MCF 10A (cell line): ENCODE measurements at regions of chr2 and their contacts with region 1.

Region 1: GRCh38 chr2:189287982-189288521 is 108.5 kb upstream of the COL5A2 start:
- DNase-seq: peak; percentile 72
- H3K4me3 Mint-ChIP-seq: no peak overlapping the region
- H3K27ac Mint-ChIP-seq: peak overlapping the region; percentile 80
- H3K4me1 Mint-ChIP-seq: peaks cover 29% of the 10 kb centered on the region
- H3K27me3 Mint-ChIP-seq: no peaks in the 10 kb centered on the region
- CTCF ChIP-seq: peak; percentile 60

Region 2: DNA sequence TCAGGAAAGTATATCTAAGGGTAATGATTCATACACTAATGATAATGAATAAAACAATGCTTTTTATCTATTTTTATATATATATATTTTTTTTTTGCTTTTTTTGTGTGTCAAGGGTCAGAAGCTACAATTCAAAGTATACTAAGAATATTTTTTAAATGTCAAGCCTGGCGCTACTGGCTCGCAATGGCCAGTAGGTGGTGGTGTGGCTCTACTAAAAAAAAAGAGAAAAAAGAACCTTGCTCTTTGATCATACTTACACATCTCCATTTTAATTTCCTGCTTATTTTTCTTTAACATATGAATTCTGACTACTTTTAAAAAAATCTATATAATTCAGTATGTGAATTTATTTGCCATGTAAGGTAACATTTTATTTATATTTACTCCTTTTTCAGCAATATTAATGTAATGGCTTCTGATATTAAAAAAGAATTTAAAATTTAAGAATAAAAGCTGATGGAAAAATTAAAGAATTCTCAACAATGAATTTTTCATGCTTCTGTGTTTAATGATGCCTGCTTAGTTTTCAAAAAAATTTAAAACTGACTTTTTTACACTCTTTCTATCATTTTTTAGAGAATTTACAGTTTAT is 763.4 kb before region 1 on chr2:
- CTCF ChIA-PET with region 1: interaction called, 3 read pairs
- POLR2A ChIA-PET with region 1: no interaction called
- intact Hi-C with region 1: loop called (anchors 1 kb)
- DNase-seq: peak; percentile 67
- H3K4me3 Mint-ChIP-seq: no peak overlapping the region
- H3K27ac Mint-ChIP-seq: no peak overlapping the region
- H3K4me1 Mint-ChIP-seq: peaks cover 7% of the 10 kb centered on the region
- H3K27me3 Mint-ChIP-seq: no peaks in the 10 kb centered on the region
- CTCF ChIP-seq: peak; percentile 73

Region 3: DNA sequence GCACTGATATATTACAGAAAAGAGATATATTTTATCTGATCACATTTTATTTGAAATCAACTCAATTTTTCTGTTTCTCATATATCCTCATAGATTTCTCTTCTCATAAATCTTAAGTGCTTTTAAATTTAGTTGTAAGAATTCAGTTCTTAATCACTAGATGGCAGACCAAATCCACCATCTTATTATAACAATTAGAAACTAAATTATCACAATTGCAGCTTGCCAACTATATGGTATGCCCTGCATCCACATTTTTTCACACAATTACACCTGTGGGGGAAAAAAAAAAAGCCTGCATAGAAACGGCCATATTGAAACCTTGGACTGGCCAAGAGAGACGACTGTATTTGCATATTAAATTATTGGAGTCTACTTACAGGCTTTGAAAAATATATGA is 172.9 kb before region 1 on chr2:
- CTCF ChIA-PET with region 1: interaction called, 51 read pairs
- POLR2A ChIA-PET with region 1: interaction called, 8 read pairs
- intact Hi-C with region 1: loop called (anchors 1 kb)
- DNase-seq: peak; percentile 29
- H3K4me3 Mint-ChIP-seq: no peak overlapping the region
- H3K27ac Mint-ChIP-seq: no peak overlapping the region
- H3K4me1 Mint-ChIP-seq: no peaks in the 10 kb centered on the region
- H3K27me3 Mint-ChIP-seq: no peaks in the 10 kb centered on the region
- CTCF ChIP-seq: peak; percentile 50

Region 4: GRCh38 chr2:189142893-189143759 is 144.9 kb before region 1 on chr2:
- CTCF ChIA-PET with region 1: interaction called, 32 read pairs
- POLR2A ChIA-PET with region 1: interaction called, 5 read pairs
- intact Hi-C with region 1: loop called (anchors 1 kb)
- DNase-seq: peak; percentile 74
- H3K4me3 Mint-ChIP-seq: no peak overlapping the region
- H3K27ac Mint-ChIP-seq: peak overlapping the region; percentile 97
- H3K4me1 Mint-ChIP-seq: peaks cover 17% of the 10 kb centered on the region
- H3K27me3 Mint-ChIP-seq: no peaks in the 10 kb centered on the region
- CTCF ChIP-seq: peak; percentile 75

Region 5: DNA sequence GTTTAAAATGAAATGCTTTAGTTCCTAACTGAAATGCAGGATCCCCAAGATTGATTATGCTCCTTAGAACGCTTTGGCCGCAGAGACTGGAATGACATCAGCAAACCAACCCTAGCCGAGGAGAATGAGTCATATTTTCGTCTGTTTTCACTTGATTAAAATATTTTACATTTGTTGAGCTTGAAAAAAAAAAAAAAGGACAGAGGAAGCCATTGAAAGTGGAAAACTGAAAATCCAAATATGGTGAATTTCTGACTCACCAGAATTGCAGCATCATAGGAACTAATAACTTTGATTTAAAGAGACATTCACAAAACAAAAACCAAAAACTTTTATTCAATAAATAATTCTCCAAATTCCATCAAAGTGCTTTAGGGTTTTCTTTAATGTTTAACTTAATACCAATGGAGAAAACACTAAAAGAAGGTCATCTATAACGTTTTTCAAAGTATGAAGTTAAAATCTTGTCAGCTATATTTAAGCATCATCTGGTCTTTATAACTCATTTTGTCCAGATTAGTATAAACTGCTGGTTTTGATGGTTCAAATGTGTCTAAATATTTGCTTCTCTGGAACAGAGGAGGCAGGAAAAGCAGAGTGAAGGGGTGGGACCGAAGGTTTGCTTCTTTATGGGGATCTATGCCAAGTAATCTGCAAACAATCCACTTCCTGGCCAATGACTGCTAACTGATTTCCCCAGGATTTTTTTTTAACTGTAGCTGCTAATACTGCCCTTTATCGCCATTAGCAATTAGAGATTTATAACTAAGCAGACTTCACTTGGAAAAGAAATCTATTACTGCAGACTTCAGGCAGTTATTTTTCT is 77.6 kb before region 1 on chr2:
- CTCF ChIA-PET with region 1: no interaction called
- POLR2A ChIA-PET with region 1: no interaction called
- intact Hi-C with region 1: loop called (anchors 1 kb)
- DNase-seq: peak; percentile 81
- H3K4me3 Mint-ChIP-seq: peak overlapping the region; percentile 8
- H3K27ac Mint-ChIP-seq: peak overlapping the region; percentile 94
- H3K4me1 Mint-ChIP-seq: peaks cover 16% of the 10 kb centered on the region
- H3K27me3 Mint-ChIP-seq: no peaks in the 10 kb centered on the region
- CTCF ChIP-seq: no peak

Region 6: DNA sequence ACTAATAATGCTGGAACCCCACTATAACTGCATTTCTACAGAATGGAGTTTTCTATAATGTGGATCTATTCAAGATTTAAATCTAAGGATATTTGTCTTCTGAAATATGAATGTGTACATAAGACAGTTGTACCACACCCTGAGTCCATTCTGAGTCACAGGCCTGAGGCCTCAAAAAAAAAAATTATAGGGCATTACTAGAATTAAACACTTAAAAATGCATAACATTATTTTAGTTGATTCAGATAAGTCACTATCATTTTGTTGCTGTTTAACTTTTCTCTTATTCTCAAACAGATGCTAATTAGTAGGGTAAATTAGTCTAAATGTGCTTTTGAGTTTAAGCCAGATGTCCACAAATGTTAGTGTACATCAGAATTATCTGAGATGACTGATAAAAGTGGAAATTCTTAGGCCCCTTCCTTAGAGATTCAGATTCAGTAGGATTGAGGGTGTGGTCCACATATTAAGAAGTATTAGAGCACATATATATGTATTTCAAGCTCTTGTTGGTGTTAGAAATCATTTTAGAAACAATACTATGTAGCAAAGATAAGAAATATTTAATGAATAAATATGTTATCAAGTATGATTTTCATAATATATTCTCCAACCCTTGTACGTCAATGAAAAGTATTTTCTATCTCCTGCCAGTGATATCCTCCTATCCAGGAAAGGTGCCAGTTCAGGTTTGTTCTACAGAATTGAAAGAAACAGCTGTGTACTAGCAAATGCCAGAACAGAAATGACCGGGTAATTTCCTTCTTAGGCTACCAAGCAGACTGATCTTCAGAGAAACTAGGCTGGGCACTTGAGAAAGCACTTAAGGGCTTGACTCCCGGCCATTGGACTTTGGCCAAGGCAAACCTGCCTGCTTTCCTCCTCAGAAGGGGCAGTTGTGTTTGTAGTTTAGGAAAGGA is 65.9 kb before region 1 on chr2:
- CTCF ChIA-PET with region 1: interaction called, 3 read pairs
- POLR2A ChIA-PET with region 1: no interaction called
- intact Hi-C with region 1: loop called (anchors 1 kb)
- DNase-seq: peak; percentile 63
- H3K4me3 Mint-ChIP-seq: peak overlapping the region; percentile 31
- H3K27ac Mint-ChIP-seq: peak overlapping the region; percentile 96
- H3K4me1 Mint-ChIP-seq: peaks cover 29% of the 10 kb centered on the region
- H3K27me3 Mint-ChIP-seq: no peaks in the 10 kb centered on the region
- CTCF ChIP-seq: no peak

Region 7: GRCh38 chr2:189347540-189347939 is 59.5 kb after region 1 on chr2:
- CTCF ChIA-PET with region 1: interaction called, 7 read pairs
- POLR2A ChIA-PET with region 1: interaction called, 3 read pairs
- intact Hi-C with region 1: loop called (anchors 5 kb)
- DNase-seq: peak; percentile 85
- H3K4me3 Mint-ChIP-seq: no peak overlapping the region
- H3K27ac Mint-ChIP-seq: peak overlapping the region; percentile 55
- H3K4me1 Mint-ChIP-seq: peaks cover 17% of the 10 kb centered on the region
- H3K27me3 Mint-ChIP-seq: no peaks in the 10 kb centered on the region
- CTCF ChIP-seq: no peak